MCF 10A (cell line): ENCODE measurements at regions of chr11 and their contacts with region 1.

Region 1: GRCh38 chr11:10735481-10736475 is 15.3 kb upstream of the CTR9 start:
- DNase-seq: peak; percentile 93
- H3K4me3 Mint-ChIP-seq: peak overlapping the region; percentile 66
- H3K27ac Mint-ChIP-seq: peak overlapping the region; percentile 82
- H3K4me1 Mint-ChIP-seq: peaks cover 14% of the 10 kb centered on the region
- H3K27me3 Mint-ChIP-seq: no peaks in the 10 kb centered on the region
- CTCF ChIP-seq: peak; percentile 98

Region 2: DNA sequence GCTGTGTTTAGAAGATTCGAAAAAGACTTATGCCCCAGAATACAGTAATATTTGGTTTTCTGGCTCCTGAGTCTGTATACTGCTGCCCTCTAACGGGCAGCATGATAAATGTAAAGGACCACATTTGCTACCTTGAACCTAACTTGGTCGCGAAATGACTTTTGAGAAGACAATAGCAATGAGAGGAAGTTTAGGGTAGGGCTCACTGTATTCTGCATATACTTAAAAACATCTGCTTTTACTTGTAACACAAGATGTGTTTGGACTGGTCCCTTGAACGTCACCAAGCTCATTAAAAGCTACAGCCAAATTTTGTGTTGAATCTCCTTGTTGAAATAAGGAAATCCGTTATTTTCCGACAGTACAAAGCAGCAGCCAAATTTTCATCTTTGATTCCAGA is 762.8 kb before region 1 on chr11:
- CTCF ChIA-PET with region 1: interaction called, 3 read pairs
- POLR2A ChIA-PET with region 1: no interaction called
- intact Hi-C with region 1: loop called (anchors 10 kb)
- DNase-seq: peak; percentile 60
- H3K4me3 Mint-ChIP-seq: no peak overlapping the region
- H3K27ac Mint-ChIP-seq: peak overlapping the region; percentile 8
- H3K4me1 Mint-ChIP-seq: peaks cover 6% of the 10 kb centered on the region
- H3K27me3 Mint-ChIP-seq: no peaks in the 10 kb centered on the region
- CTCF ChIP-seq: peak; percentile 76

Region 3: GRCh38 chr11:10405855-10406592 is 329.8 kb before region 1 on chr11:
- CTCF ChIA-PET with region 1: interaction called, 27 read pairs
- POLR2A ChIA-PET with region 1: interaction called, 7 read pairs
- intact Hi-C with region 1: loop called (anchors 1 kb)
- DNase-seq: peak; percentile 89
- H3K4me3 Mint-ChIP-seq: no peak overlapping the region
- H3K27ac Mint-ChIP-seq: peak overlapping the region; percentile 40
- H3K4me1 Mint-ChIP-seq: peaks cover 26% of the 10 kb centered on the region
- H3K27me3 Mint-ChIP-seq: no peaks in the 10 kb centered on the region
- CTCF ChIP-seq: peak; percentile 63

Region 4: GRCh38 chr11:10462746-10463300 is 273.0 kb before region 1 on chr11:
- CTCF ChIA-PET with region 1: no interaction called
- POLR2A ChIA-PET with region 1: no interaction called
- intact Hi-C with region 1: no loop called
- DNase-seq: no peak
- H3K4me3 Mint-ChIP-seq: no peak overlapping the region
- H3K27ac Mint-ChIP-seq: no peak overlapping the region
- H3K4me1 Mint-ChIP-seq: no peaks in the 10 kb centered on the region
- H3K27me3 Mint-ChIP-seq: no peaks in the 10 kb centered on the region
- CTCF ChIP-seq: no peak

Region 5: GRCh38 chr11:10564696-10565318 is 171.0 kb before region 1 on chr11:
- CTCF ChIA-PET with region 1: interaction called, 6 read pairs
- POLR2A ChIA-PET with region 1: interaction called, 4 read pairs
- intact Hi-C with region 1: loop called (anchors 1 kb)
- DNase-seq: no peak
- H3K4me3 Mint-ChIP-seq: no peak overlapping the region
- H3K27ac Mint-ChIP-seq: no peak overlapping the region
- H3K4me1 Mint-ChIP-seq: peaks cover 5% of the 10 kb centered on the region
- H3K27me3 Mint-ChIP-seq: no peaks in the 10 kb centered on the region
- CTCF ChIP-seq: peak; percentile 12

Region 6: GRCh38 chr11:10653926-10654810 is 81.6 kb before region 1 on chr11:
- CTCF ChIA-PET with region 1: interaction called, 3 read pairs
- POLR2A ChIA-PET with region 1: interaction called, 3 read pairs
- intact Hi-C with region 1: loop called (anchors 1 kb)
- DNase-seq: peak; percentile 80
- H3K4me3 Mint-ChIP-seq: no peak overlapping the region
- H3K27ac Mint-ChIP-seq: no peak overlapping the region
- H3K4me1 Mint-ChIP-seq: peaks cover 4% of the 10 kb centered on the region
- H3K27me3 Mint-ChIP-seq: no peaks in the 10 kb centered on the region
- CTCF ChIP-seq: peak; percentile 87

Region 7: DNA sequence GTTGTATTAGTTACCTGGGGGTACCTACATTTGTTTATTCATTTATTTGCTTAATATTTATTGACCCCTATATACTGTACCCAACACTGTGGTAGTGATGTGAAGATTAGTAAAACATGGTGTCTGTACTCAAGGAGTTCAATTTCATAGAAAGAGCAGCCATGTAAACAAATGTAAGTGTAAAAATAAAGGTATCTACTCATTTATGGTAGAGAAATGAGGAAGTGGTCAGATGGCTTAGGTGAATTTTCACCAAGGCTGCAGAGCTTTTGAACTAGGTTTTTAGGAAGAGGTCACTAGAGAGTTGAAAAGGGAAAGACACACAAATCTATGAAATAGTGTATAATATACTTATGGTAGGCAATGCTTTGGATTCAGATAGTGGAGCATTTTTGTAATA is 26.4 kb after region 1 on chr11:
- CTCF ChIA-PET with region 1: no interaction called
- POLR2A ChIA-PET with region 1: no interaction called
- intact Hi-C with region 1: no loop called
- DNase-seq: no peak
- H3K4me3 Mint-ChIP-seq: no peak overlapping the region
- H3K27ac Mint-ChIP-seq: no peak overlapping the region
- H3K4me1 Mint-ChIP-seq: no peaks in the 10 kb centered on the region
- H3K27me3 Mint-ChIP-seq: no peaks in the 10 kb centered on the region
- CTCF ChIP-seq: no peak

Region 8: GRCh38 chr11:11215944-11216343 is 480.2 kb after region 1 on chr11:
- CTCF ChIA-PET with region 1: no interaction called
- POLR2A ChIA-PET with region 1: no interaction called
- intact Hi-C with region 1: no loop called
- DNase-seq: no peak
- H3K4me3 Mint-ChIP-seq: no peak overlapping the region
- H3K27ac Mint-ChIP-seq: no peak overlapping the region
- H3K4me1 Mint-ChIP-seq: peaks cover 10% of the 10 kb centered on the region
- H3K27me3 Mint-ChIP-seq: peaks cover 16% of the 10 kb centered on the region
- CTCF ChIP-seq: no peak